ENCODE measurements at regions of chr4 and their contacts with region 1.

Region 1: DNA sequence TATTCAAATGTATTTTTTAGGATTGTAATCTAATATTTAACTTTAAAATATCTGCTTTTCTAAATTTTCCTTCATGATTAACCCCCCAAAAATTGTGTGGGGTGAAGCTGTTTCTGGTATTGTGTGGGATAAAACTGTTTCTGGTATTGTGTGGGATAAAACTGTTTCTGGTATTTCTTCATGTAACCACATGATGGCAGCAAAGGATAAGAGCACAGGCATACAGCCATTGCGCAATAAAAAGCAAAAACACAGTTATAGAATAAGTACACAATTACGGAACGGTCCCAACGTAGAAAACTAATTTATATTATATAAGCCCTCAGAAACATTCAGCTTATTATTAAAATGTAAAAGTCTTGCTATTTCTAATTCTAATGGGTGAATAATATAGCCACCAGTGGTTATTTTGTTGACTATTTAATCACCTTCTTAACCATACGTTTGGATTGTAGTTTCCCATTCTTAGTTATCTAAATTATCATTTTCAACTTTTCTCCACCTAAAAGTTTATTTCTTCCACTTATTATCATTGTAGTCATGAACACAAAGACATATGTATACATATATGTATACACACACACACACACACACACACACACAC is 333.9 kb upstream of the FSTL5 start:
- DNase-seq: no peak
- H3K4me3 ChIP-seq: no peak overlapping the region
- H3K27ac ChIP-seq: no peak overlapping the region
- H3K4me1 ChIP-seq: no peaks in the 10 kb centered on the region
- H3K27me3 ChIP-seq: peaks cover 0 to 3% (median 0%) of the 10 kb centered on the region in 3 donors
- CTCF ChIP-seq: peak; percentile 59 to 87 (median 80)
- EP300 ChIP-seq: no peak
- POLR2A ChIP-seq: no peak

Region 2: GRCh38 chr4:161642708-161643107 is 855.0 kb before region 1 on chr4:
- intact Hi-C with region 1: no loop called
- DNase-seq: no peak
- H3K4me3 ChIP-seq: no peak overlapping the region
- H3K27ac ChIP-seq: no peak overlapping the region
- H3K4me1 ChIP-seq: no peaks in the 10 kb centered on the region
- H3K27me3 ChIP-seq: no peaks in the 10 kb centered on the region
- CTCF ChIP-seq: no peak
- EP300 ChIP-seq: no peak
- POLR2A ChIP-seq: no peak

Region 3: GRCh38 chr4:162852642-162853041 is 355.0 kb after region 1 on chr4:
- intact Hi-C with region 1: no loop called
- DNase-seq: no peak
- H3K4me3 ChIP-seq: no peak overlapping the region
- H3K27ac ChIP-seq: no peak overlapping the region
- H3K4me1 ChIP-seq: peaks cover 0 to 13% (median 0%) of the 10 kb centered on the region in 4 donors
- H3K27me3 ChIP-seq: no peaks in the 10 kb centered on the region
- CTCF ChIP-seq: no peak
- EP300 ChIP-seq: no peak
- POLR2A ChIP-seq: no peak

Region 4: DNA sequence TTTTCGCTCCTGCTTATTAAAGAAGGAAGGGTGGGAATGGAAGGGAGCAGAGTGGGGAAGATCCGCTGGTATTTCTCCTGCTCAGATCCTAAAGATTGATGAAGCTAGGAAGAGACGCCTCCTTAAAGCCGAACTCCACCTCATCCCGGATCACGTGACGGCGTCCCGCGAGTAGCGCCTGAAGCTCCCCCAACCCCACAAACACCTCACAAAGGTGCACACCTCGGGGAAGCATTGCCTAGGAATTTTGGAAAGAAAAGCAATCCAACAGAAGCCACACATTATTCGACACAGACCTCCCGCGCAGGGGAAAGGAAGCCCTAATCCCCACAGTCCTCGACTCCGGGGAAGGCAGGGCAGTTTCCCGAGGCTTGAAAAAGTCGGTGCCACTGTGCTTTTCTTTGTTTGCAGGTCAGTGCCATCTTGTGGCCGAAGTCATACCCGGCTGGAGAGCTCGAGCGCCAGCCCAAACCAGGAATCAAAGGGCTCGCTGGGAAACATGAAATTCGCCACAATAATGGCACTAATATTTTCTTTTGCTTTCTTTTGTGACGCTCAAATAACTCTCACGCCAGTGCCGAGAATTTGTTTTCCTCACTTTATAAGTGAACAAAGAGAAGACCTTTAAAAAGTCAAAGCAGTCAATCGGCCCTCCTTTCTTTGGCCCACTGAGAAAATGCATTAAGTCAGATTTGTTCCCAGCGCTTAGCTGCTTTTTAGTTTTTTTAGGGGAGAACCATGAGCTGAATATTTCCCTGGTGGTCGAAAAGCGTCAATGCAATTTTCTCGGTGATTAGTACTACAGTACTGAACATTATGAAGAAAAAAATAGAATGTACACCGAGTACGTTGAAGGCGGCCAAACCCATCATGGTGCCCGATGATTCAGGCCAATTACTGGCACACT is 835.1 kb after region 1 on chr4 and contains the start of gene NPY1R:
- intact Hi-C with region 1: loop called (anchors 1 kb)
- DNase-seq: peak; percentile 77
- H3K4me3 ChIP-seq: peak within 1 kb of the TSS; percentile 13 to 56 (median 47)
- H3K27ac ChIP-seq: peak within 1 kb of the TSS in 2 of 4 donors; percentile 23 to 30
- H3K4me1 ChIP-seq: peaks cover 0 to 21% (median 8%) of the 10 kb centered on the region in 4 donors
- H3K27me3 ChIP-seq: peaks cover 0 to 26% (median 0%) of the 10 kb centered on the region in 3 donors
- CTCF ChIP-seq: peak; percentile 27 to 64 (median 34)
- EP300 ChIP-seq: no peak
- POLR2A ChIP-seq: no peak
- total RNA-seq, gene NPY1R: 0.49 to 2.9 (median 1.9) TPM

Measured in sigmoid colon (tissue), 7 donors.